Naive thymus-derived CD4-positive, alpha-beta T cell (primary cell): ENCODE measurements at regions of chr1 and their contacts with region 1.

Region 1: DNA sequence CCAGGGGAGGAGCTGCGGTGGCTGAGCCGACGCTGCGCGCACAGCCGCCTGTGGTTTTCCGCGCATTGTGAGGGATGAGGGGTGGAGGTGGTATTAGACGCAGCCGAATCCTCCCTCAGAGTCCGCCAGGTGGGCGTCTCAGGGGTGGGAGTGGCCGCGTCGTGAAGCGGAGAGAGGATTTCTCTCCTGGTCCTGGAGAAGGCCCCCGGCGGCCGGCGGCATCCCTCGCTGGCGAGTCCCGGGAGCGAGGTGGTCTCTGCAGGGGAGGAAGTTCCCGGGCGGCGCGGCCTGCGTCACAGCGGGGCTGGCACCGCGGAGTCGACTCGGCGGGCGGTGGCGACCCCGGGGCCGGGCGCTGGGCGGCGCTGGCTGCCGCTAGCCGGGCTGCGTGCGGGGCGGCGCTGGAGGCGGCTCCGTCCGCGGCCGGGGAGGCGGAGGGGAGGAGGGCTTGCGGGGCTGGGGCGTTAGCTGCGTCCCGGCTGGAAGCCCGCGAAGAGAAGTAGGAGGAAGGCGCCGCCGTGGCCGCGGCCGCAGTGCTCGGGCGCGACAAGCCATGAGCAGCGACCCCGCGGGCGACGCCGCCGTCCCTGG is at the start of gene LRRC8C:
- DNase-seq: peak; percentile 86 to 96 (median 92)
- ATAC-seq: peak; percentile 89
- H3K4me3 ChIP-seq: peak within 1 kb of the TSS; percentile 74
- H3K4me3 Mint-ChIP-seq: peak within 1 kb of the TSS; percentile 92 to 99 (median 98)
- H3K27ac ChIP-seq: peak within 1 kb of the TSS; percentile 93
- H3K27ac Mint-ChIP-seq: peak within 1 kb of the TSS; percentile 93 to 99 (median 98)
- H3K4me1 ChIP-seq: peaks cover 53 to 65% of the 10 kb centered on the region in 2 donors
- H3K4me1 Mint-ChIP-seq: peaks cover 61 to 85% (median 81%) of the 10 kb centered on the region in 7 donors
- H3K27me3 ChIP-seq: no peaks in the 10 kb centered on the region
- H3K27me3 Mint-ChIP-seq: no peaks in the 10 kb centered on the region
- total RNA-seq, gene LRRC8C: 27.1 to 50.5 (median 46.6) TPM

Region 2: GRCh38 chr1:89483010-89483756 is 149.6 kb before region 1 on chr1:
- CTCF ChIA-PET with region 1: interaction called, 3 read pairs
- POLR2A ChIA-PET with region 1: no interaction called
- intact Hi-C with region 1: loop called (anchors 1 to 2 kb)
- DNase-seq: peak; percentile 37 to 77 (median 67)
- ATAC-seq: peak; percentile 97
- H3K4me3 ChIP-seq: no peak overlapping the region
- H3K4me3 Mint-ChIP-seq: no peak overlapping the region
- H3K27ac ChIP-seq: no peak overlapping the region
- H3K27ac Mint-ChIP-seq: no peak overlapping the region
- H3K4me1 ChIP-seq: no peaks in the 10 kb centered on the region
- H3K4me1 Mint-ChIP-seq: peaks cover 0 to 18% (median 9%) of the 10 kb centered on the region in 7 donors
- H3K27me3 ChIP-seq: no peaks in the 10 kb centered on the region
- H3K27me3 Mint-ChIP-seq: peaks cover 0 to 5% (median 0%) of the 10 kb centered on the region in 5 donors

Region 3: DNA sequence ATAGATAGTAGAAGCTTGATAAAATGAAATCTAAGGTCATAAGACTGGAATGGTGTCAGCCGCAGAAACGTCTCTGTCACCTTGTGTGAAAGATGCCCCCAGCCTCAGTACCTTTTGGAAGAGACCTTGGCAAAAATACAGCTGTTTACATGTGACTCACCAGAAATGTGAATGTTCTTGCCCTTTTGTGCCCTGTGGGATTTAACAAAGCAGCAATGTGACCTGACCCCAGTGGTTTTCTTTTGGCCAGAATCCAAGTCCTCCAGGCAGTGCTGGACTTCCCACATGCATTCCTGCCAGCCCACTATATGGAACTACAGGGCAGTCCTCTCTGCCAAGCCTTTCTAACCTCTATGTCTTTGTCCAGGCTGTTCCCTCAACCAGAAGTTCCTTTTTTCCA is 27.1 kb before region 1 on chr1:
- CTCF ChIA-PET with region 1: interaction called, 86 read pairs
- POLR2A ChIA-PET with region 1: interaction called, 834 read pairs
- intact Hi-C with region 1: loop called (anchors 1 kb)
- DNase-seq: no peak
- ATAC-seq: no peak
- H3K4me3 ChIP-seq: peak overlapping the region; percentile 17
- H3K4me3 Mint-ChIP-seq: peak overlapping the region in 8 of 10 donors; percentile 52 to 96 (median 88)
- H3K27ac ChIP-seq: peak overlapping the region; percentile 92
- H3K27ac Mint-ChIP-seq: peak overlapping the region; percentile 97 to 100 (median 99)
- H3K4me1 ChIP-seq: peaks cover 82 to 85% of the 10 kb centered on the region in 2 donors
- H3K4me1 Mint-ChIP-seq: peaks cover 44 to 96% (median 93%) of the 10 kb centered on the region in 7 donors
- H3K27me3 ChIP-seq: no peaks in the 10 kb centered on the region
- H3K27me3 Mint-ChIP-seq: no peaks in the 10 kb centered on the region

Region 4: DNA sequence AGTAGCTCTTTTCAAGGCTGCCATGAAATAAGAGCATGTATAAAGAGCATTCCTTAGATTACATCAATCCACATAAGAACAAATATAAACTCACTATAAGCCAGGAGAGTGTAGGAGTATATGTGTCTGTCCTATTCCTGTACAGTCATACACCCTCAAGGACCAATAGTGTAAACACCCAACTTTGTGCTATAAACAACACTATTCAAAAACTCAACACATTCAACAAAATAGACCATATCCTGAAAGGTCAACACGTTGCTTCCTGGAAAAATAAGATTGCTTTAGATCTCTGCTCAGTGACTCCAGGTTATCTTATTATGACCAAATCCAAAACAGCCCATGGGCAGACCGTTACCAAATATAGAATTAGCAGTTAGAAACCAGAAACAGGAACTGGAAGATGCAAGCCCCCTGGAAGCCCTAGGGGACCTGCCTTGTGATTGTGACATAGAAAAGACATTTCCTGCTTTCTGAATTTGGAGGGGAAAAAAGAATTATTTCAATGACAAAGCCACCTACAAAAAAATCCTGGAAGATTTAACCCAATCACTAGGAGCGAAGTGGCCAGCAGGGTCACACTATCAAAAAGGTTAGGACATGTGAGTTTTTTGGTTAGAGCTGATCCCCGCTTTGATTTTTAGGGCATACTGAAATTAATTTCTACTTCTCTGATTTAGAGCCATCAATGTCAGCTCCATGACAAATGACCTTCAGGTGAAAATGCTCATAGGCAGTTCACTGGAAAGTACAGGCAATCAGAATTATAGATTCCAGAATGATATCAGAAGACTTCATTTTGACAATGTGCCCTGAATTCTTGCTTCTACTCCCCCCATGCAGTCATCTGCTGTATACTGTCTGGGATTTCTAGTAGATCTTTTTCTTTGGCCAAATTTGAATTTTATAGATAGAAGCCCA is 60.1 kb after region 1 on chr1:
- CTCF ChIA-PET with region 1: no interaction called
- POLR2A ChIA-PET with region 1: interaction called, 3 read pairs
- intact Hi-C with region 1: loop called (anchors 2 kb)
- DNase-seq: no peak
- ATAC-seq: peak; percentile 34
- H3K4me3 ChIP-seq: no peak overlapping the region
- H3K4me3 Mint-ChIP-seq: peak overlapping the region in 7 of 10 donors; percentile 2 to 78 (median 37)
- H3K27ac ChIP-seq: no peak overlapping the region
- H3K27ac Mint-ChIP-seq: peak overlapping the region; percentile 37 to 88 (median 72)
- H3K4me1 ChIP-seq: peaks cover 38 to 50% of the 10 kb centered on the region in 2 donors
- H3K4me1 Mint-ChIP-seq: peaks cover 46 to 98% (median 90%) of the 10 kb centered on the region in 7 donors
- H3K27me3 ChIP-seq: no peaks in the 10 kb centered on the region
- H3K27me3 Mint-ChIP-seq: no peaks in the 10 kb centered on the region

Region 5: GRCh38 chr1:89820422-89821321 is 187.9 kb after region 1 on chr1 and contains the start of gene LRRC8D:
- CTCF ChIA-PET with region 1: no interaction called
- POLR2A ChIA-PET with region 1: no interaction called
- intact Hi-C with region 1: loop called (anchors 1 to 2 kb)
- DNase-seq: peak; percentile 46 to 80 (median 57)
- ATAC-seq: peak; percentile 84
- H3K4me3 ChIP-seq: peak within 1 kb of the TSS; percentile 84
- H3K4me3 Mint-ChIP-seq: peak within 1 kb of the TSS; percentile 85 to 97 (median 89)
- H3K27ac ChIP-seq: peak within 1 kb of the TSS; percentile 66
- H3K27ac Mint-ChIP-seq: peak within 1 kb of the TSS; percentile 67 to 92 (median 81)
- H3K4me1 ChIP-seq: peaks cover 7 to 14% of the 10 kb centered on the region in 2 donors
- H3K4me1 Mint-ChIP-seq: peaks cover 20 to 44% (median 36%) of the 10 kb centered on the region in 7 donors
- H3K27me3 ChIP-seq: no peaks in the 10 kb centered on the region
- H3K27me3 Mint-ChIP-seq: peaks cover 0 to 20% (median 0%) of the 10 kb centered on the region in 5 donors
- total RNA-seq, gene LRRC8D: 21.1 to 42.6 (median 37.3) TPM

Region 6: DNA sequence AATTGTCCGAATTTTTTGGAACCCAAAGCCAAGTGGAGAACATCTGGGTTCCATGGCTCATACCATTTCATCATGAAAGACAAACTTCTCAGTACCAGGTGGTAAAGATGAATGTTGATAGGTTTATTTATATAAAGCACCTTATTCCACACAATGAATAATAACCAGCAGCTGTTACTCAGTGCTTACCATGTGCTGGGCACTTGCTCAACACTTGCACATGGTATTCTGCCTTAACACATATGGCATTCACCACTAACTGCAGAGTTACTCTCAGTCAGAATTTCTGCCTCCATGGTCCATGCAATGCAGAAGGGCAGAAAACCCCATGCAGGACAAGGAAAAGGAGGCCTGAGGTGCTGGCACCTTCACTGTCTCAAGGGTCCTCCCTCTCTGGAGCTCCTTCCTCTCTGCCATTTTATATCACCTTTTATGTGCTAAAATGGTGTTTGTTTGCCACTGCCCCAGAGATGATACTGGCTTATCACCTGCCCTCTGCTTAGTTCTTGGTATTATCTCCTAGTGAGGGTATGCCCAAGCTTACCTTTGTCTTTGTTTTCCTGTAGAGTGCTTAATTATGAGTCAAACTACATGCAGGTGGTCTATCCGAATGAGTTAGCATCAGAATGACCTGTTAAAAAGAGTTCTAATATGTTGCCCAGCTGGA is 285.5 kb after region 1 on chr1:
- CTCF ChIA-PET with region 1: no interaction called
- POLR2A ChIA-PET with region 1: no interaction called
- intact Hi-C with region 1: no loop called
- DNase-seq: no peak
- ATAC-seq: no peak
- H3K4me3 ChIP-seq: no peak overlapping the region
- H3K4me3 Mint-ChIP-seq: no peak overlapping the region
- H3K27ac ChIP-seq: no peak overlapping the region
- H3K27ac Mint-ChIP-seq: peak overlapping the region in 1 of 9 donors; percentile 48
- H3K4me1 ChIP-seq: no peaks in the 10 kb centered on the region
- H3K4me1 Mint-ChIP-seq: peaks cover 5 to 31% (median 12%) of the 10 kb centered on the region in 7 donors
- H3K27me3 ChIP-seq: no peaks in the 10 kb centered on the region
- H3K27me3 Mint-ChIP-seq: no peaks in the 10 kb centered on the region